ENCODE measurements at regions of chr2 and their contacts with region 1.

Region 1: DNA sequence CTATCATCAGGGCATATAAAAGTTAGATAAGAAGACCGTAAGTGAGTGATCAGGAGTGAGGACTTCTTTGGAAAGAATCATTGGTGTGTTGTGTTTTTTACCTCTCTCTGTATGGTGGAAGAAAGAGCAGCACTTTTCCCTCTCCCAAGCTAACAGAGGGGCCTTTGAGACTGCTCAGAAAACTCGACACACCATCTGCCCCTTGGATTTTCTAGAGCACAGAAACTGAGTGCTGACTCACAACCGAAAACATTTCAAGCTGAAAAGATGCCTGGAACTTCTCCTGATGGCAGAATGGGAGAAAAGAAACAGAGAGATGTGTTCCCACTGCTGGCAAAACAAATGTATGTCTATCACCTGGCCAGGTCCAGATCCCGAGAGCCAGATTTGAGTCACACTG is 156.6 kb downstream of the DNAH7 start:
- DNase-seq: no peak
- ATAC-seq: no peak
- H3K4me3 ChIP-seq: no peak overlapping the region
- H3K4me3 Mint-ChIP-seq: no peak overlapping the region
- H3K27ac ChIP-seq: no peak overlapping the region
- H3K27ac Mint-ChIP-seq: no peak overlapping the region
- H3K4me1 ChIP-seq: no peaks in the 10 kb centered on the region
- H3K4me1 Mint-ChIP-seq: no peaks in the 10 kb centered on the region
- H3K27me3 ChIP-seq: no peaks in the 10 kb centered on the region
- H3K27me3 Mint-ChIP-seq: no peaks in the 10 kb centered on the region
- CTCF ChIP-seq: no peak

Region 2: DNA sequence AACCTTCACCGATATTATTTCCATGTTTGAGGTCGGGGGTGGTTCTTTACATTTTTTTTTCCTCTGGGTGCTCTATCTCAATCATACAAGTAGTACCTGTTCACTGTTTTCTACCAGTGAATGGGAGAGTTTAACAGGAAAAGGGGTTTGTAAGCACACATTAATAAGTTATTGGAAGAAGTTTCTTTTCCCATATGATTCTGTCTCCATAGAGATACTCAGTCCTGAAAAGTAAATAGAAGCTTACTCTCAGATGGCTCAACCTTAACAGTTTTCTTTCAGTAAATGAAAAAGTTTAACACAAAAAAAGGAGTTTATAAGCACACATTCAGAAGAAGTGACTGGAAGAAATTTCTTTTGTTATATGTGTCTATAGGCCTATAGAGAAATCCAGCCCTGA is 1250.6 kb before region 1 on chr2:
- CTCF ChIA-PET with region 1: no interaction called
- POLR2A ChIA-PET with region 1: no interaction called
- intact Hi-C with region 1: loop called in 1 of 2 experiments (anchors 10 kb)
- DNase-seq: no peak
- ATAC-seq: no peak
- H3K4me3 ChIP-seq: no peak overlapping the region
- H3K4me3 Mint-ChIP-seq: no peak overlapping the region
- H3K27ac ChIP-seq: no peak overlapping the region
- H3K27ac Mint-ChIP-seq: no peak overlapping the region
- H3K4me1 ChIP-seq: no peaks in the 10 kb centered on the region
- H3K4me1 Mint-ChIP-seq: no peaks in the 10 kb centered on the region
- H3K27me3 ChIP-seq: no peaks in the 10 kb centered on the region
- H3K27me3 Mint-ChIP-seq: no peaks in the 10 kb centered on the region
- CTCF ChIP-seq: no peak